HEK293T (cell line): ENCODE measurements at regions of chr12 and their contacts with region 1.

Region 1: GRCh38 chr12:57213058-57213715 is 3.4 kb upstream of the NXPH4 start:
- DNase-seq: peak; percentile 88

Region 2: DNA sequence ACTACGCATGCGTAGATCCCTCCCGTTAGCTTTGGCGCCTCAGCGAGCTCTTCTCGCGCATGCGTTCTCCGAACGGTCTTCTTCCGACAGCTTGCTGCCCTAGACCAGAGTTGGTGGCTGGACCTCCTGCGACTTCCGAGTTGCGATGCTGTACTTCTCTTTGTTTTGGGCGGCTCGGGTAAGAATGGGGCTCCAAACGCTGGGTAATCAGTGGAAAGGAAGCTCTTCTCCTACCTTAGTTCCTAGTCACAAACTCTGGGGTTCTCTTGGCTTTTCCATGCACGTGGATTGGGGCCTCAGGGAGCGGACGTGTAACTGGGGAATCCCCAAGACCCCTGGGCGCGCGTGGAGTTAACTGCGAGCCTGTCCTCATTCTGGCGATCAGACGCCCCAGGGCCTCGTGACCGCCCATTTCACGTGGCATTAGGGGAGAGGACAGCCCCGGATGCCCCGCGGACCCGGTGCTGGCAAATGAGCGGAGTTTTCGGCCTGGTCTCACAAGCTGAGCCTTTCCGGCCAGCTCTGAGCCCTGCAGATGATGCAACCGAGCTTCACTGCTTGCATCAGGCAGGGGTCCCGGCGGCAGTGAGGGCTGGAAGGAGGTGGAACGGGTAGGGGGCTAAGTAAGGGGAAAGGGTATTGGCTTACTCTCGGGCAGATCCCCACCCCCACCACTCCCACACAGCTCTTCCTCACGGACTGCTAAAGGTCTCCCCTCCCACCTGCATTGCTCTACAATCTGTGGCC is 16.6 kb after region 1 on chr12 and contains the start of gene SHMT2:
- CTCF ChIA-PET with region 1: interaction called, 21 read pairs
- POLR2A ChIA-PET with region 1: interaction called, 87 read pairs
- DNase-seq: peak; percentile 99

Region 3: DNA sequence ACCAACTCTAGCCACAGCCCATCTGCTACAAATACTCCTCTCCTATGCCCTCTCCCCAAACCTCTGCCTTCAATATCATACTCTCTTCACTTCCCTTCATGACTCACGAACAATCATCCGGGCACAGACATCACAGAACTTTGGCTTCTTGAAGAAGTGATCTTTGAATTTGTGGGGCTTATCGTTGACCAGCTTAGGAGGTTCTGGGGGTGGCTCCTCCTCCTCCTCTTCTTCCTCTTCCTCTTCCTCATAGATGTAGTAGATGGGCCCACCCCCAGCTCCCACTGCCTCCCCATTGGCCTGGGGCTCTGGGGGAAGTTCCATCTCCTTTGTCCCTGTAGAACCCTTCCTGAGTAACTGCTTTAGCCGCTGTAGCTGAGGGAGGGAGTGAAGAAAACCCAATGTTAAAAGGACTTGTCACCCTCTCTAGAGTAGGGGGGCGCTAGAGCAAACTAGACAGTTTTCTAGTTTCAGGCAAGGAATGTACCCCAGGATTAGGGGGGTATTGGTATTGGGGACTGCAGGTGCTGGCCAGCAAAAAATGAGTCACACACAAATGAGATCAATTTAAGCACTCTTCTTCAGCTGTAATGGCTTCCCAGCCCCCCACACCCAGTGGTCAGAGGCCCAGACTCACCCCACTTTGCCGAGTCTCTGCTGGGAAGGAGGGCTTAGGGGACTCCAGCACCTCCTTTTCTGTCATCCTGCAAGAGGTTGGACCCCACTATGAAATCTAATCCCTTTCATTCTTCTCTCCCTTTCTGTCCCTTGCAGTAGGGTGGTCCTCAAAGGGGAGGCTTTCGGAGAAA is 36.0 kb after region 1 on chr12:
- CTCF ChIA-PET with region 1: interaction called, 121 read pairs
- POLR2A ChIA-PET with region 1: interaction called, 3 read pairs
- DNase-seq: no peak

Region 4: DNA sequence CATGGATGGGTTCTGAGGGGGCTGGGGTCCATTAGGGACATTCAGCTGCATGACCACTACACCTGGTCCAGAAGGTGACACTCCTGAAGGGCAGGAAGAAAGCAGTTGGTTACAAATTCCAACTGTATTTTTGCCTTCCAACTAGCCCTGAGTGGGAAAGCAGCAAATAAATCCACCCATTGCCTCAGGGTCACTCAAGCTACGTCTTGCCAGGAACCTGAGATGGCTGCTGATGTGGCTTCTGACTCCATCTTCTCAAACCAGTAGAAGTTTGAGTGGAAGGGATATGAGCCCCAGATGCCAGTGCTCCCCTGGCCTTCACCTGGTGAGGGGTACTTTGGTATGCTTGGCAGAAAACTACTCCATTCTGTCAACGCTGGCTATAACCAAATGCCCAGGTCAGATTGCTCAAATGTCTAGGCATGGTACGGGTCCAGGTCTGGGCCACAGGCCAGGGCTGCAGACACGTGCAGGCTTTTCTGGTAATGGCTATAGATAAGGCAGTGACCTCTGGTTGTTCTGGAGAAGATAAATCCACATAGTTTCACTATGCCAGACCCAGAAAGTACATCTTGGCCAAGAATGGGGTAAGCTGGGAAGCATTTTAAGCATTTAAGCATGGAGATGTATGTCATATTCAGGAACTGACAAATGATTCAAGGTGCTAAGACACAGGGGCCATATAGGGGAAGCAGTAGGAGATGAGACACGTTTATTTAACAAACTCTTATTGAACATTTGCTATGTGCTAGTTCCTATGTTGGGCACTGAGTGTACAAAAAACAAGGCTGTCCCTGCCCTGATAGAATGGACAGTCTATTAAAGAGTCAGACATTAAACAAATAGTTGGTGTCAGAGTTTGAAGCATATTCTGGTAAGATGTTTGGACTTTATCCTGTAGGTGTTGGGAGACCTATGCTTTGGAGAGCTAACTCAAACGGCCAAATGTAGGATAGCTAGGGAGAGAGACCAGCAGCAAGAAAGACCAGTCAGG is 46.1 kb after region 1 on chr12:
- CTCF ChIA-PET with region 1: no interaction called
- POLR2A ChIA-PET with region 1: no interaction called
- DNase-seq: no peak